Activated CD8-positive, alpha-beta T cell treated with anti-CD3 and anti-CD28 coated beads for 36 hours (primary cell): ENCODE measurements at regions of chr1 and their contacts with region 1.

Region 1: DNA sequence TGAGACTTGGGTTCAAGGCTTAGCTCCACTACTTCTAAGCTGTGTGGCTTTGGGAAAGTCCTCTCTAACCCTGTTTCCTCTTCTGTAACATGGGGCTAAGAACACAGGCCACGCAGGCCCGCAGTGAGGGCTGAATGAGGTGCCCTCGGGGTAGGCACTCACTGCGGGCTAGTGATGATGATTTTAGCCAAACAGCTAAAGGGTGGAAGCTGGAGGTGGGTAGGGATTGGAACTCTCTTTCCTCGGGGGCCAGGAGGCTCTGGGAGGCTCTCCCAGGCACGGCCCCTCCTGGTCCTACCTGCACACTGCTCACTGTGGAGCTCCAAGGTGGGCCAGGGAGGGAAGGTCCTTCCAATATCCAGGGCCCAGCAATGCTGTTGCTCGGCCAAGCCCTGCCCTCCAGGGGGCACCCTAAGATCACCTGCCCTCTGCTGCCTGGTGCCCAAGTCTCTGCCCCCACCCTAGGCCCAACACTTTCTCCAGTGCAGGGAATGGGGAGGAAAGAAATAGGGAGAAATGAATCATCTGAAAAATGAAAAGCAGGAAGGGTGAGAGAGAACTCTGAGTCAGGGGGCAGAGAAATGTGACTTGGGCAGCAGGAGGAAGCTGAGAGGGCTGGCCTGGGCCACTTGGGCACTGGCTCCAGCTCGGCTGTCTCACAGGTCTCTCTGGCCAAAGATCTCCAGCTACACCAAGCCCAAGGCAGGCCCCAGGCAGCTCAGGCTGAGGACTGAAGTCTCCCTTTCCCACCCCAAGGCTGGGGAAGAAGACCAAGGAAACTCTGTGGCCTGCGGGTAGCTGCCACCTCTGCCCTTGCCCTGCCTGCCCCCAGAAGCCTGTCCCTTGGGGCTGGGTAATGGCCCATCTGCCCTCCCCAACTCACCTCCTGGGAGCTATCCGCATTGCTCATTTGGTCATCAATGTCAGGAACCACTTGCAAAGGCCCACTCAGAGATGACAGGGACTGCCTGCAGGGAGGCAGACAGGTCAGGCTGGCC is 19.3 kb upstream of the EVA1B start:
- DNase-seq: peak; percentile 69
- ATAC-seq: peak; percentile 91
- H3K4me3 Mint-ChIP-seq: no peak overlapping the region
- H3K27ac Mint-ChIP-seq: peak overlapping the region; percentile 34
- H3K4me1 Mint-ChIP-seq: peaks cover 2% of the 10 kb centered on the region
- H3K27me3 Mint-ChIP-seq: no peaks in the 10 kb centered on the region
- CTCF ChIP-seq: peak; percentile 83

Region 2: DNA sequence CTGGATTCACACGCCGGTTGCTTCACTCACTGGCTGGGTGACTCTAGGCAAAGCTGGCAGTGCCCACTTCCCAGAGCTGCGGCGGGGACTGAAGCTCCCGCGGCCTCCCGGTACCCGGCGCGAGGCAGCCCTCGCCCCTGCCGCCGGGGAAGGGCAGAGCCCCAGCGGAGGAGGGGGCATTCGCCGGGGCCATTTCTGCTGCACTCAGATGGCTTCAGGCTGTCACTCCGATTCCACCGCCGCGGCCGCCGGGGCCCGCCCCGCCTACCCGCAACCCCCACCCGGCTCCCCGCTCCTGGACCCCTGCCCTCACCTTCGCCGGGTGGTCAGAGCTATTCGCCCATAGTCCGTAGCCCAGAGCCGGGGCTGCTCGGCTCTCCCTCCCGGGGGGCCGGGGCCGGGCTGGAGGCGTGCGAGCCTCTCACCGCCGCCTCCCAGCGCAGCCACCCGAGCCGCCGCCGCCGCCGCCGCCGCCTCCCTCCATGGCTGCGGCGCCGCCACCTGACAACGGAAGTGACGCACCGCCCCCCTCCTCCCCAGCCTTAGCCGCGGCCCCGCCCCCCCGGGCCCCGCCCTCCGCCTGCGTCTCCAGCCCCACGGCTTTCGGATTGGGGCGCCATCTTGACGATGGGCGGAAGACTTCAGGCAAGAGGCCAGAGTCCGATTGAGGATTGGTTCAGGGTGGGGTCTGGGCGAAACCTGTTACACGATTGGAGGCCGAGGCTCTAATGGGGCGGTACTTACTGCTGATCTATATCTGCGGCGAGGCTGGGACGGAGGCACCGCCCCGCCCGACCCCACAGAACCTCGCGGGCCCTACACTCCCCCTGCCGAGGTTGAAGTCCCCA is 42.9 kb after region 1 on chr1 and contains the start of gene STK40:
- CTCF ChIA-PET with region 1: interaction called, 11 read pairs
- POLR2A ChIA-PET with region 1: interaction called, 3 read pairs
- intact Hi-C with region 1: no loop called
- DNase-seq: peak; percentile 98
- ATAC-seq: peak; percentile 90
- H3K4me3 Mint-ChIP-seq: peak within 1 kb of the TSS; percentile 80
- H3K27ac Mint-ChIP-seq: peak within 1 kb of the TSS; percentile 98
- H3K4me1 Mint-ChIP-seq: peaks cover 46% of the 10 kb centered on the region
- H3K27me3 Mint-ChIP-seq: no peaks in the 10 kb centered on the region
- CTCF ChIP-seq: no peak
- total RNA-seq, gene STK40: 41.2 to 44.4 TPM

Region 3: DNA sequence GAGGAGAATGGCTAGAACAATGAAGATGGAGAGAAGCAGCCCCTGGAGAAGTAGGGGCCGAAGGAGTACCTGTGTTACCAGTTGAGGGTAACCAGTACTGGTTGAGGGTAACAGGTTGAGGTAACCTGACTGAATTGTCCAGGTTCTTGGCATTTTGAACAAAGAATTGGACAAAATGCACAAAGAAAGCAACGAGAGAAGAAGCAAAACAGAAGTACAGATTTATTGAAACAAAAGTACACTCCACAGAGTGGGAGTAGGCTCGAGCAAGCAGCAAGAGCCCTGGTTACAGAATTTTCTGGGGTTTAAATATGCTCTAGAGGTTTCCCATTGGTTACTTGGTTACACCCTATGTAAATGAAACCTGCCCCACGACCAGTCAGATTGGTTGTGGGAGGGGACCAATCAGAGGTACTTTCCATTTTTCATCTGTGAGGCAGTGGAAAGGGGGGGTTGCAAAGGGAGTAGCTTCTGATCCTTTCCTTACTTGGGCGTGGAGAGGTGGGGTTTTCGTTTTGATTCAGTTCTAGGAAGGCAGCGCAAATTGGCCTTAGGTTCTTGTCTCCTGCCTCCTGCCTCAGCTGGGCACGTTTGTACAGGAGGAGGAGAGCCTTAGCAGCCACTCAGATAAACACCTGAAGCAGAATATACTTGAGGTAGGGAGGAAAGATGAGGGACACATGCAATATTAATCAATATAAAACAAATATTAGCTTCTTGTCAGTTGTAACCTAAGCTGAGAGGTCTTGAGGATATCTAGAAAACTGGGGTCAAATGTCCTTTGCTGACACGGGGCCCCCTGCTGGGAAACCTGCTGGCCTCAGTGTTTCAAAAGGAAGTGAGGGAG is 69.1 kb after region 1 on chr1:
- CTCF ChIA-PET with region 1: interaction called, 10 read pairs
- POLR2A ChIA-PET with region 1: no interaction called
- intact Hi-C with region 1: no loop called
- DNase-seq: peak; percentile 84
- ATAC-seq: peak; percentile 99
- H3K4me3 Mint-ChIP-seq: peak overlapping the region; percentile 29
- H3K27ac Mint-ChIP-seq: peak overlapping the region; percentile 89
- H3K4me1 Mint-ChIP-seq: peaks cover 16% of the 10 kb centered on the region
- H3K27me3 Mint-ChIP-seq: no peaks in the 10 kb centered on the region
- CTCF ChIP-seq: no peak

Region 4: GRCh38 chr1:36420836-36421664 is 78.3 kb after region 1 on chr1:
- CTCF ChIA-PET with region 1: interaction called, 68 read pairs
- POLR2A ChIA-PET with region 1: interaction called, 3 read pairs
- intact Hi-C with region 1: loop called (anchors 5 kb)
- DNase-seq: peak; percentile 95
- ATAC-seq: peak; percentile 100
- H3K4me3 Mint-ChIP-seq: no peak overlapping the region
- H3K27ac Mint-ChIP-seq: peak overlapping the region; percentile 91
- H3K4me1 Mint-ChIP-seq: peaks cover 16% of the 10 kb centered on the region
- H3K27me3 Mint-ChIP-seq: no peaks in the 10 kb centered on the region
- CTCF ChIP-seq: peak; percentile 94